ENCODE measurements at regions of chr16 and their contacts with region 1.

Region 1: DNA sequence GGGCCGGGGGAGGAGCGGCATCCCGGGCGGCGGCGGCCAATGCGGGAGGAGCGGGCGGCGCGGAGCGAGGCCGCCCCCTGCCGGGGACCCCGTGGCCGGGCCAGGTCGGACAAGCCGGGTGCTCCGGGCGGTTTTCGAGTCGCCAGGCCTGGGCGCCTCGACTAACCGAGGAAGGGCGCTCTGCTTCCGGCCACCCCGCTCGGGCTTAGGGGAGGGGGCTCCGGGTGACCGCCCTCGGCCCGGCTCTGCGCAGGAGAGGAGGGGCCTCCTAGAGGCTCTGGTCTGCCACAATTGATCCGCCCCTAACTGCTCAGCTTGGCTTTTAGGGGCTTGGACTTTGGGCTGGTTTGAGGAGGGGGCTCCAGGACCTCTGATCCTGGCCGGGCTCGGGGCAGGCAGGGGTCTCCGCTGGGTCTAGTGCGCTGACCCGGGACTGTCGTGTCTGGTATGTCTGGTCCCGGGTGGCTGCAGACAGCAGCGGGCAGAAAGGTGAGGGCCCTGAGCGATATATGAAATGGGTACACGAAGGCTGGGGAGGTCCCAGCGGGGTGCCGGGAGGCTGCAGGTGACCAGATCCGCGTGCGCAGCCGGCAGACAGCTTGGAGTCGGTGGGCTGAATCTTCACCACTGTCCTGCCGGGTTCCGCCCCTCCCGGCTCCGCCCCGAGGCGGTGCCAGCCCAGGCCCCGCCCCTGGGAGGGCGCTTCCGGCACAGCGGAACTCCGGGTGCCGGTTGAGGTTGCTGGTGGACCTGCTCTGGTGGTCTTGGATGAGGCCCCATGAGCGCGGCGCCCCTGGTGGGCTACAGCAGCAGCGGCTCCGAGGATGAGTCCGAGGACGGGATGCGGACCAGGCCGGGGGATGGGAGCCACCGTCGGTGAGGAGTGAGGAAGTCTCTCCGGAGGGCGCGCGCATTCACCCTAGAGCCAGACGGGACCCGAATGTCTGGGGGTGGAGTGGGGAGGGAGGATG is at the start of gene USB1:
- DNase-seq: peak; percentile 74 to 96 (median 86)
- ATAC-seq: peak; percentile 87
- H3K4me3 ChIP-seq: peak within 1 kb of the TSS; percentile 98
- H3K4me3 Mint-ChIP-seq: peak within 1 kb of the TSS; percentile 85 to 94 (median 92)
- H3K27ac ChIP-seq: peak within 1 kb of the TSS; percentile 85
- H3K27ac Mint-ChIP-seq: peak within 1 kb of the TSS; percentile 76 to 95 (median 90)
- H3K4me1 ChIP-seq: peaks cover 37% of the 10 kb centered on the region in 2 donors
- H3K4me1 Mint-ChIP-seq: peaks cover 31 to 75% (median 58%) of the 10 kb centered on the region in 7 donors
- H3K27me3 ChIP-seq: no peaks in the 10 kb centered on the region
- H3K27me3 Mint-ChIP-seq: no peaks in the 10 kb centered on the region
- total RNA-seq, gene USB1: 28.7 to 50.8 (median 28.9) TPM

Region 2: GRCh38 chr16:56450986-56451752 is 1549.8 kb before region 1 on chr16 and contains the starts of genes NUDT21 and OGFOD1:
- CTCF ChIA-PET with region 1: no interaction called
- POLR2A ChIA-PET with region 1: no interaction called
- intact Hi-C with region 1: loop called in 1 of 2 experiments (anchors 5 kb)
- DNase-seq: peak; percentile 67 to 96 (median 93)
- ATAC-seq: peak; percentile 99
- H3K4me3 ChIP-seq: peak within 1 kb of the TSS; percentile 96
- H3K4me3 Mint-ChIP-seq: peak within 1 kb of the TSS; percentile 94 to 100 (median 97)
- H3K27ac ChIP-seq: peak within 1 kb of the TSS; percentile 92
- H3K27ac Mint-ChIP-seq: peak within 1 kb of the TSS; percentile 92 to 98 (median 93)
- H3K4me1 ChIP-seq: peaks cover 24 to 42% of the 10 kb centered on the region in 2 donors
- H3K4me1 Mint-ChIP-seq: peaks cover 50 to 77% (median 64%) of the 10 kb centered on the region in 7 donors
- H3K27me3 ChIP-seq: no peaks in the 10 kb centered on the region
- H3K27me3 Mint-ChIP-seq: no peaks in the 10 kb centered on the region
- total RNA-seq, gene NUDT21: 74.0 to 191 (median 97.5) TPM
- total RNA-seq, gene OGFOD1: 23.8 to 51.8 (median 42.1) TPM

Region 3: DNA sequence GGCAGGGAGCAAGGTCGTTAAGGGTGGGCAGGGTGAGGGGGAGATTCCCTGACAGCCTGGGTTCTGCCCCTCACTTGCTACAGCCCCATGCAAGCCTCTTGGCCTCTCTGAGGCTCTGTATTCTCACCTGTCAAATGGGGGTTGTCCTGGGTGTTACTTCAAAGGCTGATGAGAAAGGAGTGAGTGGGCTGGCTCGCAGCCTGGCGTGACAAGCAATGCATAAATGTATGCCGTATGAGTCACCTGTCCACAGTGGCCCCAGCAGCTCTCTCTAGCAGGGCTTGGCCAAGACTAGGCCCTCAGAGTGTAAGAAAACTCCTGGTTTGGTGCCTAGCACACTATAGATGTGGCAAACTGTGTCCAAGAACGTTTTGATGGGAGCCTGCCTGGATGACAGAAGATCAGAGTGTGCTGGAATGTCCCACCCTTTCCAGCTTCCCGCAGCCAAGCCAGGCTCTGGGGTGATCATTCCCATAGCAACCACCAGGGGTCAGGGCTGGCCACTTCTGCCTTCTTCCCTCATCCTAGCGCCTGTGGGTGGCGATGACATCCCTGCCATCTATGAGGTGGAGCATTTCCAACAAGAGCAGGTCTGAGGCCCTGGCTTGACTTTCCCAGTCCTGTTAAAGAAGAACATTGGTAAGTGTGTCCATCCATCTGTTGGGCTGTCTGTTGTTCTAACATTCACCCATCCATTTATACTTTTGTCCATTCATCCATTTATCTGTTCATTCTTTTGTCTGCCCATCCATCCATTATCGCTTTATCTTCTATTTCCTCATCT is 409.7 kb before region 1 on chr16:
- CTCF ChIA-PET with region 1: no interaction called
- POLR2A ChIA-PET with region 1: no interaction called
- intact Hi-C with region 1: loop called (anchors 5 kb)
- DNase-seq: peak; percentile 30 to 72 (median 48)
- ATAC-seq: peak; percentile 70
- H3K4me3 ChIP-seq: peak overlapping the region; percentile 25
- H3K4me3 Mint-ChIP-seq: peak overlapping the region; percentile 9 to 83 (median 69)
- H3K27ac ChIP-seq: no peak overlapping the region
- H3K27ac Mint-ChIP-seq: peak overlapping the region; percentile 17 to 92 (median 75)
- H3K4me1 ChIP-seq: peaks cover 27 to 47% of the 10 kb centered on the region in 2 donors
- H3K4me1 Mint-ChIP-seq: peaks cover 26 to 43% (median 38%) of the 10 kb centered on the region in 7 donors
- H3K27me3 ChIP-seq: no peaks in the 10 kb centered on the region
- H3K27me3 Mint-ChIP-seq: peaks cover 0 to 2% (median 0%) of the 10 kb centered on the region in 5 donors

Region 4: GRCh38 chr16:57810197-57811031 is 190.6 kb before region 1 on chr16:
- CTCF ChIA-PET with region 1: no interaction called
- POLR2A ChIA-PET with region 1: no interaction called
- intact Hi-C with region 1: loop called in 1 of 2 experiments (anchors 1 kb)
- DNase-seq: peak in 2 of 9 donors; percentile 20 to 79
- ATAC-seq: peak; percentile 97
- H3K4me3 ChIP-seq: peak overlapping the region; percentile 37
- H3K4me3 Mint-ChIP-seq: peak overlapping the region in 1 of 10 donors; percentile 70
- H3K27ac ChIP-seq: no peak overlapping the region
- H3K27ac Mint-ChIP-seq: peak overlapping the region in 4 of 9 donors; percentile 10 to 91 (median 16)
- H3K4me1 ChIP-seq: peaks cover 8 to 39% of the 10 kb centered on the region in 2 donors
- H3K4me1 Mint-ChIP-seq: peaks cover 8 to 30% (median 17%) of the 10 kb centered on the region in 7 donors
- H3K27me3 ChIP-seq: no peaks in the 10 kb centered on the region
- H3K27me3 Mint-ChIP-seq: peaks cover 23 to 40% (median 28%) of the 10 kb centered on the region in 5 donors

Region 5: GRCh38 chr16:57863434-57864160 is 137.4 kb before region 1 on chr16:
- CTCF ChIA-PET with region 1: no interaction called
- POLR2A ChIA-PET with region 1: no interaction called
- intact Hi-C with region 1: no loop called
- DNase-seq: no peak
- ATAC-seq: no peak
- H3K4me3 ChIP-seq: no peak overlapping the region
- H3K4me3 Mint-ChIP-seq: no peak overlapping the region
- H3K27ac ChIP-seq: no peak overlapping the region
- H3K27ac Mint-ChIP-seq: no peak overlapping the region
- H3K4me1 ChIP-seq: no peaks in the 10 kb centered on the region
- H3K4me1 Mint-ChIP-seq: peaks cover 0 to 4% (median 0%) of the 10 kb centered on the region in 7 donors
- H3K27me3 ChIP-seq: no peaks in the 10 kb centered on the region
- H3K27me3 Mint-ChIP-seq: peaks cover 10 to 25% (median 18%) of the 10 kb centered on the region in 5 donors

Region 6: DNA sequence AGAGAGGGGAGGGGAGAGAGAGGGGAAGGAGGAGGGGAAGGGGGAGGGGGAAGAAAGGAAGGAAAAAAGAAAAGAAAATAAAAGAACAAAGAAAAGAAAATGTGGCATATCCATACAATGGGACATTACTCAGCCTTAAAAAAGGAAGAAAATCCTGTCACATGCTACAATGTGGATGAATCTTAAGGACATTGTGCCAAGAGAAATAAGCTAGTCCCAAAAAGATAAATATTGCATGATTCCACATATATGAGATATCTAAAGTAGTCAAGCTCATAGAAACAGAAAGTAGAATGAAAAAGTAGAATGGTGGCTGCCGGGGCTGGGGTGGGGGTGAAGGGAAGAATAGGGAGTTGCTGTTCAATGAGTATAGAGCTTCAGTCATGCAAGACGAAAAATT is 70.5 kb before region 1 on chr16:
- CTCF ChIA-PET with region 1: no interaction called
- POLR2A ChIA-PET with region 1: no interaction called
- intact Hi-C with region 1: loop called in 1 of 2 experiments (anchors 2 kb)
- DNase-seq: no peak
- ATAC-seq: no peak
- H3K4me3 ChIP-seq: no peak overlapping the region
- H3K4me3 Mint-ChIP-seq: no peak overlapping the region
- H3K27ac ChIP-seq: no peak overlapping the region
- H3K27ac Mint-ChIP-seq: no peak overlapping the region
- H3K4me1 ChIP-seq: no peaks in the 10 kb centered on the region
- H3K4me1 Mint-ChIP-seq: peaks cover 0 to 2% (median 0%) of the 10 kb centered on the region in 7 donors
- H3K27me3 ChIP-seq: no peaks in the 10 kb centered on the region
- H3K27me3 Mint-ChIP-seq: peaks cover 0 to 12% (median 0%) of the 10 kb centered on the region in 5 donors

Region 7: DNA sequence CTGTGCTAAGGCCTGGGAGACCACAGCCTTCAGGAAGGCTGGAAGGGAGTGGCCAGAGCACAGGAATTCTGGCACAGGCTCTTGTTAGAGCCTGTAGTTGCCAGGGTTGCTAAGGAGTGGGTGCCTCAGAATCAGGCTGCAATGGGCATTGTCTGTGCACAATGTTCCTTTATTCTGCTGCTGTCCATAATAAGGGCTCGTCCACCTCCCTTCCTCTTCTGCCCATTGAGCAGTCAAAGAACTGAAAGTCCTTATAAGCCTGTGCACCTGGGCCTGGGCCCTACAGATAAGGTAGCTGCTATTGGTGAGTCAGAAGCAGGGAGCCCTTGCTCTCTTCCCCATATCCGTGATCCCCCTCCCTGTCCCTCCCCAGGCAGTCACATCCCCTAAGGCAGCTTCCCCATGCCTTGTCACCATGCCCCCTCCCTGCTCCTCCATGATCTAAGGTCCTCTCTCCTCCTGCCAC is 24.6 kb before region 1 on chr16:
- CTCF ChIA-PET with region 1: no interaction called
- POLR2A ChIA-PET with region 1: no interaction called
- intact Hi-C with region 1: no loop called
- DNase-seq: no peak
- ATAC-seq: no peak
- H3K4me3 ChIP-seq: no peak overlapping the region
- H3K4me3 Mint-ChIP-seq: no peak overlapping the region
- H3K27ac ChIP-seq: no peak overlapping the region
- H3K27ac Mint-ChIP-seq: no peak overlapping the region
- H3K4me1 ChIP-seq: no peaks in the 10 kb centered on the region
- H3K4me1 Mint-ChIP-seq: peaks cover 0 to 6% (median 0%) of the 10 kb centered on the region in 7 donors
- H3K27me3 ChIP-seq: no peaks in the 10 kb centered on the region
- H3K27me3 Mint-ChIP-seq: peaks cover 0 to 4% (median 0%) of the 10 kb centered on the region in 5 donors

Region 8: GRCh38 chr16:58198022-58198683 is 197.2 kb after region 1 on chr16 and contains the start of gene CSNK2A2:
- CTCF ChIA-PET with region 1: no interaction called
- POLR2A ChIA-PET with region 1: no interaction called
- intact Hi-C with region 1: loop called in 1 of 2 experiments (anchors 5 kb)
- DNase-seq: peak; percentile 38 to 81 (median 60)
- ATAC-seq: peak; percentile 99
- H3K4me3 ChIP-seq: peak within 1 kb of the TSS; percentile 63
- H3K4me3 Mint-ChIP-seq: peak within 1 kb of the TSS; percentile 84 to 93 (median 88)
- H3K27ac ChIP-seq: peak within 1 kb of the TSS; percentile 62
- H3K27ac Mint-ChIP-seq: peak within 1 kb of the TSS; percentile 61 to 90 (median 82)
- H3K4me1 ChIP-seq: peaks cover 21 to 22% of the 10 kb centered on the region in 2 donors
- H3K4me1 Mint-ChIP-seq: peaks cover 30 to 51% (median 46%) of the 10 kb centered on the region in 7 donors
- H3K27me3 ChIP-seq: no peaks in the 10 kb centered on the region
- H3K27me3 Mint-ChIP-seq: peaks cover 9 to 33% (median 13%) of the 10 kb centered on the region in 5 donors
- total RNA-seq, gene CSNK2A2: 46.5 to 70.0 (median 67.9) TPM

Region 9: DNA sequence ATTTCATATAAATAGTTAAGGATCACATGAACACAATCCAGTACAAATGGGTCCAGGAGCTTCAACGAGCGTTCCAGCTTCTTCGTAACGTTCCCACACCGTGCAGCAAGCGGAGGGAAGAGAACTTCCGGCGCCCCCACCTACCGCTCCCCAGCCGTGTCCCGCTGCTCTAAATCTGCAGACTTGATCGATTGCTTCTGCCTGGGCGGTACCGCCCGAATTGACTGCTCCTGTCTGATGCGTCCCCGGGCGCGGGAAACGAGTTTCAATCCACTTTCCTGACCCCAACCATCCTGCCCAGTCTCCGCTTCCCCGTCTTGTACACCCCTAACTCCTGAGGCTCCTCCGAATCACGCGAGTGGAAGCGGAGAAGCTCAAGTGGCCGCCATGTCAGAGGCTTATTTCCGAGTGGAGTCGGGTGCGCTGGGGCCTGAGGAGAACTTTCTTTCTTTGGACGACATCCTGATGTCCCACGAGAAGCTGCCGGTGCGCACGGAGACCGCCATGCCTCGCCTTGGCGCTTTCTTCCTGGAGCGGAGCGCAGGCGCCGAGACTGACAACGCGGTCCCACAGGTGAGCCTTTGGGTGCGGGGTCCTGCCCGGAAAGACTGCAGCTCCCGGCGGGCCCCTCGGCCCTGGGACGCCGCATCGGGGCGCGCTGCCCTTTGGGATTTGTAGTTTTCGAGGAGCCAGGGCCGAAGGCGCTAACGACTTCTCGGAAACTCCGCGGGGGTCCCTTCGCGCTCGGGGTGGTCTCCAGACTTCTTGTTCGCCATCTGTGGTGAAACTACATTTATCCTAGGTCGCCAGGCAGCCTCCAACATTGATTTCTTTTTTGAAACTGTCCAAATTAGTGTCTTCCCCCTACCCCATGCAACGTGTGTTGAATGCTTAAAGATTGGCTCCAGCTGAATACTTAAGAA is 391.5 kb after region 1 on chr16 and contains the start of gene GINS3:
- CTCF ChIA-PET with region 1: no interaction called
- POLR2A ChIA-PET with region 1: no interaction called
- intact Hi-C with region 1: loop called in 1 of 2 experiments (anchors 1 kb)
- DNase-seq: peak; percentile 67 to 83 (median 81)
- ATAC-seq: peak; percentile 96
- H3K4me3 ChIP-seq: peak within 1 kb of the TSS; percentile 99
- H3K4me3 Mint-ChIP-seq: peak within 1 kb of the TSS; percentile 91 to 100 (median 98)
- H3K27ac ChIP-seq: peak within 1 kb of the TSS; percentile 80
- H3K27ac Mint-ChIP-seq: peak within 1 kb of the TSS; percentile 89 to 99 (median 95)
- H3K4me1 ChIP-seq: peaks cover 5 to 6% of the 10 kb centered on the region in 2 donors
- H3K4me1 Mint-ChIP-seq: peaks cover 3 to 28% (median 16%) of the 10 kb centered on the region in 7 donors
- H3K27me3 ChIP-seq: no peaks in the 10 kb centered on the region
- H3K27me3 Mint-ChIP-seq: peaks cover 0 to 21% (median 0%) of the 10 kb centered on the region in 5 donors
- total RNA-seq, gene GINS3: 0.66 to 13.3 (median 1.4) TPM